Naive thymus-derived CD4-positive, alpha-beta T cell (primary cell): ENCODE measurements at regions of chr11 and their contacts with region 1.

Region 1: DNA sequence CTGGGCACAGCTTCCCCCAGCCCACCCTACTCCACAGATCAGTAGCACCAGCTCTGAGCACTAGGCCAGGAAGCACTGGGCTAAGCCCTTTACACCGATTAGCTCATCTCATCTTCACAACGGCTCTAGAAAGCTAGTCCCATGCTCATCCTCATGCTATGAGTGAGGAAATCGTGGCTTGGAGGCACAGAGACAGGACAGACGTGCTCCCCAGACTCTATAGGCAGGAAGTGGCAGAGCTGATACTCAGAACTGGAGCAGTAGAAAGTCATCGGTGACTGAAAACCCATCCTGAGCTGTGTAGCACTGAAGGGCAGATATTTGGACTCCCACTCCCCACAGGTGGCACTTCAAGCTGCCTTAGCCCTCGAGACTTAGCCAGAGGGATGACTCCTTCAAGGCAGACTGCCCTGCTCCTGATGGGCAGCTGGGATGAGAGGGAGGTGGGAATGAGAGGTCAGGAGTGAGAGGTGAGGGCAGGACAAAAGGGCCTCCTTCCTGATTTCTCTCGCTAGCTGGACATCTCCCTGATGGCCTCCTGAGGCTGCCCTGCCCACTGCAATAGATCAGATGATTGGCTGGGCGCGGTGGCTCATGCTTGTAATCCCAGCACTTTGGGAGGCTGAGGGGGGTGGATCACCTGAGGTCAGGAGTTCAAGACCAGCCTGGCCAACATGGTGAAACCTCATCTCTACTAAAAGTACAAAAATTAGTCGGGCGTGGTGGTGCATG is 9.7 kb downstream of the CD5 start:
- DNase-seq: peak in 8 of 9 donors; percentile 57 to 78 (median 74)
- ATAC-seq: peak; percentile 81
- H3K4me3 ChIP-seq: peak overlapping the region; percentile 31
- H3K4me3 Mint-ChIP-seq: peak overlapping the region in 9 of 10 donors; percentile 82 to 93 (median 86)
- H3K27ac ChIP-seq: peak overlapping the region; percentile 78
- H3K27ac Mint-ChIP-seq: peak overlapping the region in 7 of 9 donors; percentile 81 to 98 (median 92)
- H3K4me1 ChIP-seq: peaks cover 58 to 93% of the 10 kb centered on the region in 2 donors
- H3K4me1 Mint-ChIP-seq: peaks cover 81 to 100% (median 97%) of the 10 kb centered on the region in 7 donors
- H3K27me3 ChIP-seq: no peaks in the 10 kb centered on the region
- H3K27me3 Mint-ChIP-seq: no peaks in the 10 kb centered on the region

Region 2: GRCh38 chr11:61061081-61061826 is 50.7 kb before region 1 on chr11:
- CTCF ChIA-PET with region 1: no interaction called
- POLR2A ChIA-PET with region 1: interaction called, 10 read pairs
- intact Hi-C with region 1: loop called in 1 of 2 experiments (anchors 1 kb)
- DNase-seq: peak in 7 of 9 donors; percentile 47 to 89 (median 56)
- ATAC-seq: peak; percentile 86
- H3K4me3 ChIP-seq: peak overlapping the region; percentile 34
- H3K4me3 Mint-ChIP-seq: peak overlapping the region; percentile 75 to 94 (median 83)
- H3K27ac ChIP-seq: peak overlapping the region; percentile 72
- H3K27ac Mint-ChIP-seq: peak overlapping the region; percentile 88 to 99 (median 96)
- H3K4me1 ChIP-seq: peaks cover 24 to 48% of the 10 kb centered on the region in 2 donors
- H3K4me1 Mint-ChIP-seq: peaks cover 47 to 83% (median 80%) of the 10 kb centered on the region in 7 donors
- H3K27me3 ChIP-seq: no peaks in the 10 kb centered on the region
- H3K27me3 Mint-ChIP-seq: no peaks in the 10 kb centered on the region

Region 3: GRCh38 chr11:61071208-61071681 is 40.7 kb before region 1 on chr11:
- CTCF ChIA-PET with region 1: interaction called, 5 read pairs
- POLR2A ChIA-PET with region 1: interaction called, 39 read pairs
- intact Hi-C with region 1: loop called (anchors 5 kb)
- DNase-seq: peak in 8 of 9 donors; percentile 56 to 78 (median 71)
- ATAC-seq: peak; percentile 96
- H3K4me3 ChIP-seq: peak overlapping the region; percentile 21
- H3K4me3 Mint-ChIP-seq: peak overlapping the region; percentile 65 to 87 (median 76)
- H3K27ac ChIP-seq: peak overlapping the region; percentile 76
- H3K27ac Mint-ChIP-seq: peak overlapping the region; percentile 92 to 97 (median 97)
- H3K4me1 ChIP-seq: peaks cover 41 to 81% of the 10 kb centered on the region in 2 donors
- H3K4me1 Mint-ChIP-seq: peaks cover 69 to 99% (median 91%) of the 10 kb centered on the region in 7 donors
- H3K27me3 ChIP-seq: no peaks in the 10 kb centered on the region
- H3K27me3 Mint-ChIP-seq: peaks cover 0 to 4% (median 0%) of the 10 kb centered on the region in 5 donors

Region 4: GRCh38 chr11:61091373-61092279 is 20.3 kb before region 1 on chr11:
- CTCF ChIA-PET with region 1: interaction called, 6 read pairs
- POLR2A ChIA-PET with region 1: interaction called, 62 read pairs
- intact Hi-C with region 1: no loop called
- DNase-seq: peak in 1 of 9 donors; percentile 74
- ATAC-seq: peak; percentile 34
- H3K4me3 ChIP-seq: peak overlapping the region; percentile 27
- H3K4me3 Mint-ChIP-seq: peak overlapping the region; percentile 41 to 90 (median 74)
- H3K27ac ChIP-seq: peak overlapping the region; percentile 79
- H3K27ac Mint-ChIP-seq: peak overlapping the region; percentile 86 to 98 (median 91)
- H3K4me1 ChIP-seq: peaks cover 10 to 27% of the 10 kb centered on the region in 2 donors
- H3K4me1 Mint-ChIP-seq: peaks cover 28 to 72% (median 49%) of the 10 kb centered on the region in 7 donors
- H3K27me3 ChIP-seq: no peaks in the 10 kb centered on the region
- H3K27me3 Mint-ChIP-seq: no peaks in the 10 kb centered on the region

Region 5: GRCh38 chr11:61325649-61326414 is 213.9 kb after region 1 on chr11:
- CTCF ChIA-PET with region 1: no interaction called
- POLR2A ChIA-PET with region 1: no interaction called
- intact Hi-C with region 1: no loop called
- DNase-seq: no peak
- ATAC-seq: no peak
- H3K4me3 ChIP-seq: no peak overlapping the region
- H3K4me3 Mint-ChIP-seq: no peak overlapping the region
- H3K27ac ChIP-seq: no peak overlapping the region
- H3K27ac Mint-ChIP-seq: peak overlapping the region in 1 of 9 donors; percentile 33
- H3K4me1 ChIP-seq: no peaks in the 10 kb centered on the region
- H3K4me1 Mint-ChIP-seq: peaks cover 12 to 35% (median 29%) of the 10 kb centered on the region in 7 donors
- H3K27me3 ChIP-seq: no peaks in the 10 kb centered on the region
- H3K27me3 Mint-ChIP-seq: no peaks in the 10 kb centered on the region